GM12878 (cell line): ENCODE measurements at regions of chr3 and their contacts with region 1.

Region 1: DNA sequence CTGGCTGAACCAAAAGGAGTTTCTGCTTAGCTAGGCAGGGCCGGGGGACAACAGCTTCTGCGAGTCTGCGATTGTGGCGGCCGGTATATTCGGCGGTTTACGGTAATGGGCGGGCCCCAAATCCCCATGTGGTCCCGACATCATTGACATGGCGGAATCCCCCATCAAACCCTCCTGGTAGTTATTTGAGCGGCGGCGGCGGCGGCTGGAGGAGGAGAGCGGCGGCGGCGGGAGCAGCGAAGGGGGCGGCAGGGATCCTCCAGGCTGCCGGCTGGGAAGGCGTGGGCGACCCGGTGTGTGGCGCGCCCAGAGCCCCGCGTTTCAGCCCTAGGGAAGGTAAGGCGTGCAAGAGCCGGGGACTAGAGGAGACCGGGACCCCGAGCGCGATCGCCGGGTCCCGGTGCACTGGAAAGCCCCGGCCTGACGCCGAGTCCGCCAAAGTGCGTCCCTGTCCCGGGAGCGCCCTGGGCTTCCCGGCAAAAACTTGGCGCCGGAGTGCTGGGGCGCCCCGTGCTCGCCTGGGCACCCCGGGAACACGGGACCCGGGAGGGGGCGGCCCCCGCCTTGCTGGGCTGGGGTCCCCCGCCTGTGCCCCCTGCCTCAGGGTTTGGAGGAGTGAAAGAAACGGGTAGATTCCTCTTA is at the start of gene FNDC3B:
- DNase-seq: peak; percentile 59
- ATAC-seq: peak; percentile 82
- H3K4me3 ChIP-seq: peak within 1 kb of the TSS; percentile 91
- H3K27ac ChIP-seq: peak within 1 kb of the TSS; percentile 93
- H3K4me1 ChIP-seq: peaks cover 24% of the 10 kb centered on the region
- H3K27me3 ChIP-seq: no peaks in the 10 kb centered on the region
- CTCF ChIP-seq: no peak
- EP300 ChIP-seq: 0 out of 4 replicates have a peak, but pooled peaks of 1 of the 2 experiments have one; percentile 14
- POLR2A ChIP-seq: peak; percentile 90
- RAD21 ChIP-seq: peak; percentile 41; the same call in 1 of the 2 replicates
- polyA plus RNA-seq, gene FNDC3B: 7.9 to 11.9 TPM

Region 2: DNA sequence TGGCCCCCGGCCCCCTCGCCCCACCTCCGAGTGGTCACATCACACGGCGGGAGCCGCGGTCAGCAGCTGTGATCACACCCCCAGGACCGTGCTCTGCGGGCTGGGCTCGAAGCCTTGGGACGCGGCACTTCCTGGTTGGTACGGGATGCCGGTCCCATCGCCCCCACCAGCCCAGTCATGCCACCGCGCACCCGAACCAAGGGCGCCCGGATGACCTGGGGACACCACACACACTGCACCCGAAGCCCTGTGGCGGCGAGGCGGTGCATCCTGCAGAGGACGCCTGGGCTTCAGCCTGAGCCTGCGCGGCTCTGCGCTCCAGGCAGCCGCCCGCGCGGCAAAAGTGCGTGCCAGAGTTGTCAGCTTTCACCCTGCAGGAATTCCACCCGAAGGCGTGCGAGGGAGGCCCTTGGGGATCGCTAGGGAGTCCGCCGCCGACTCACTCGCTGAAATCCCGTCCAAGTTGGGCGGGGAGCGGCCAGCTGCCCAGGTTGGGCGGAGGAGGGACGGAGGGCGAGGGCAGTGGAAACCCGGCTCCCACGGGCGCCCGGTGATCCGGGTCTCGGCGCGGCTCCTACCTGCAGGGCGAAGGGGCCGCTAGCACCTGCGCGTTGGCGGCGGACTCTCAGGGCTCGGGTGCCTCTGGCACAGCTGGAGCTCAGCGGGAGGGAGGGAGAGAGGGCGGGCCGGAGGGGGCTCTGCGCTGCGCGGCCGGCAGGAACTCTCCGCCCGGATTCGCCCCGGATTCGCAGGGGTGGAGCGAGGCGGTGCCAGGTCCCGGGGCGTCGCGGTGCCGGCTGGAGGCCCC is 229.5 kb before region 1 on chr3 and contains the start of gene PLD1:
- CTCF ChIA-PET with region 1: no interaction called
- POLR2A ChIA-PET with region 1: no interaction called
- RAD21 ChIA-PET with region 1: no interaction called
- SMC1A ChIA-PET with region 1: no interaction called
- in situ Hi-C with region 1: no loop called
- intact Hi-C with region 1: loop called (anchors 1 kb)
- DNase-seq: no peak
- ATAC-seq: peak; percentile 72
- H3K4me3 ChIP-seq: peak within 1 kb of the TSS; percentile 69
- H3K27ac ChIP-seq: peak within 1 kb of the TSS; percentile 45
- H3K4me1 ChIP-seq: no peaks in the 10 kb centered on the region
- H3K27me3 ChIP-seq: no peaks in the 10 kb centered on the region
- CTCF ChIP-seq: 0 out of 6 replicates have a peak, but pooled peaks of 1 of the 3 experiments have one; percentile 5
- EP300 ChIP-seq: peak; percentile 6 to 12; a peak in 2 of 4 replicates
- POLR2A ChIP-seq: no peak
- RAD21 ChIP-seq: no peak
- polyA plus RNA-seq, gene PLD1: 3.1 to 3.4 TPM

Region 3: GRCh38 chr3:172021164-172021563 is 18.4 kb before region 1 on chr3:
- CTCF ChIA-PET with region 1: interaction called, 12 read pairs
- POLR2A ChIA-PET with region 1: interaction called, 3 read pairs
- RAD21 ChIA-PET with region 1: interaction called, 3 read pairs
- SMC1A ChIA-PET with region 1: interaction called, 7 read pairs
- in situ Hi-C with region 1: no loop called
- intact Hi-C with region 1: no loop called
- DNase-seq: no peak
- ATAC-seq: no peak
- H3K4me3 ChIP-seq: no peak overlapping the region
- H3K27ac ChIP-seq: no peak overlapping the region
- H3K4me1 ChIP-seq: no peaks in the 10 kb centered on the region
- H3K27me3 ChIP-seq: no peaks in the 10 kb centered on the region
- CTCF ChIP-seq: no peak
- EP300 ChIP-seq: no peak
- POLR2A ChIP-seq: no peak
- RAD21 ChIP-seq: no peak

Region 4: GRCh38 chr3:172094621-172095557 is 55.3 kb after region 1 on chr3:
- CTCF ChIA-PET with region 1: interaction called, 3 read pairs
- POLR2A ChIA-PET with region 1: interaction called, 11 read pairs
- RAD21 ChIA-PET with region 1: interaction called, 12 read pairs
- SMC1A ChIA-PET with region 1: interaction called, 110 read pairs
- in situ Hi-C with region 1: no loop called
- intact Hi-C with region 1: no loop called
- DNase-seq: peak; percentile 62
- ATAC-seq: peak; percentile 96
- H3K4me3 ChIP-seq: no peak overlapping the region
- H3K27ac ChIP-seq: peak overlapping the region; percentile 54
- H3K4me1 ChIP-seq: peaks cover 35% of the 10 kb centered on the region
- H3K27me3 ChIP-seq: no peaks in the 10 kb centered on the region
- CTCF ChIP-seq: peak; percentile 8 to 31 (median 29); a peak in 4 of 6 replicates
- EP300 ChIP-seq: no peak; a peak in 1 of 4 replicates
- POLR2A ChIP-seq: no peak
- RAD21 ChIP-seq: peak; percentile 44

Region 5: GRCh38 chr3:172270557-172271166 is 231.1 kb after region 1 on chr3:
- CTCF ChIA-PET with region 1: interaction called, 11 read pairs
- POLR2A ChIA-PET with region 1: no interaction called
- RAD21 ChIA-PET with region 1: interaction called, 7 read pairs
- SMC1A ChIA-PET with region 1: interaction called, 6 read pairs
- in situ Hi-C with region 1: no loop called
- intact Hi-C with region 1: loop called (anchors 5 kb)
- DNase-seq: peak; percentile 66
- ATAC-seq: peak; percentile 99
- H3K4me3 ChIP-seq: no peak overlapping the region
- H3K27ac ChIP-seq: no peak overlapping the region
- H3K4me1 ChIP-seq: peaks cover 19% of the 10 kb centered on the region
- H3K27me3 ChIP-seq: no peaks in the 10 kb centered on the region
- CTCF ChIP-seq: no peak
- EP300 ChIP-seq: peak in 1 of 2 experiments; percentile 82; a peak in 2 of 4 replicates
- POLR2A ChIP-seq: no peak
- RAD21 ChIP-seq: no peak

Region 6: GRCh38 chr3:172341482-172342059 is 302.0 kb after region 1 on chr3:
- CTCF ChIA-PET with region 1: interaction called, 16 read pairs
- POLR2A ChIA-PET with region 1: no interaction called
- RAD21 ChIA-PET with region 1: interaction called, 6 read pairs
- SMC1A ChIA-PET with region 1: interaction called, 11 read pairs
- in situ Hi-C with region 1: no loop called
- intact Hi-C with region 1: loop called (anchors 5 kb)
- DNase-seq: peak; percentile 24
- ATAC-seq: peak; percentile 92
- H3K4me3 ChIP-seq: no peak overlapping the region
- H3K27ac ChIP-seq: no peak overlapping the region
- H3K4me1 ChIP-seq: no peaks in the 10 kb centered on the region
- H3K27me3 ChIP-seq: no peaks in the 10 kb centered on the region
- CTCF ChIP-seq: peak; percentile 53 to 67 (median 59); a peak in 5 of 6 replicates
- EP300 ChIP-seq: no peak
- POLR2A ChIP-seq: no peak
- RAD21 ChIP-seq: peak; percentile 73